ENCODE measurements at regions of chr4 and their contacts with region 1.

Region 1: GRCh38 chr4:2843263-2843940 is at the start of gene ADD1:
- DNase-seq: peak; percentile 94
- ATAC-seq: peak; percentile 88
- H3K4me3 Mint-ChIP-seq: peak within 1 kb of the TSS; percentile 88
- H3K27ac Mint-ChIP-seq: peak within 1 kb of the TSS; percentile 89
- H3K4me1 Mint-ChIP-seq: peaks cover 56% of the 10 kb centered on the region
- H3K27me3 Mint-ChIP-seq: no peaks in the 10 kb centered on the region
- total RNA-seq, gene ADD1: 196 to 206 TPM

Region 2: GRCh38 chr4:2412885-2413716 is 430.3 kb before region 1 on chr4:
- CTCF ChIA-PET with region 1: no interaction called
- POLR2A ChIA-PET with region 1: no interaction called
- intact Hi-C with region 1: loop called in 1 of 2 experiments (anchors 5 kb)
- DNase-seq: peak; percentile 94
- ATAC-seq: peak; percentile 82
- H3K4me3 Mint-ChIP-seq: peak overlapping the region; percentile 70
- H3K27ac Mint-ChIP-seq: peak overlapping the region; percentile 97
- H3K4me1 Mint-ChIP-seq: peaks cover 69% of the 10 kb centered on the region
- H3K27me3 Mint-ChIP-seq: peaks cover 9% of the 10 kb centered on the region

Region 3: GRCh38 chr4:2745981-2746806 is 97.2 kb before region 1 on chr4:
- CTCF ChIA-PET with region 1: no interaction called
- POLR2A ChIA-PET with region 1: no interaction called
- intact Hi-C with region 1: loop called (anchors 1 to 2 kb)
- DNase-seq: peak; percentile 98
- ATAC-seq: peak; percentile 97
- H3K4me3 Mint-ChIP-seq: peak overlapping the region; percentile 62
- H3K27ac Mint-ChIP-seq: peak overlapping the region; percentile 97
- H3K4me1 Mint-ChIP-seq: peaks cover 58% of the 10 kb centered on the region
- H3K27me3 Mint-ChIP-seq: no peaks in the 10 kb centered on the region

Region 4: DNA sequence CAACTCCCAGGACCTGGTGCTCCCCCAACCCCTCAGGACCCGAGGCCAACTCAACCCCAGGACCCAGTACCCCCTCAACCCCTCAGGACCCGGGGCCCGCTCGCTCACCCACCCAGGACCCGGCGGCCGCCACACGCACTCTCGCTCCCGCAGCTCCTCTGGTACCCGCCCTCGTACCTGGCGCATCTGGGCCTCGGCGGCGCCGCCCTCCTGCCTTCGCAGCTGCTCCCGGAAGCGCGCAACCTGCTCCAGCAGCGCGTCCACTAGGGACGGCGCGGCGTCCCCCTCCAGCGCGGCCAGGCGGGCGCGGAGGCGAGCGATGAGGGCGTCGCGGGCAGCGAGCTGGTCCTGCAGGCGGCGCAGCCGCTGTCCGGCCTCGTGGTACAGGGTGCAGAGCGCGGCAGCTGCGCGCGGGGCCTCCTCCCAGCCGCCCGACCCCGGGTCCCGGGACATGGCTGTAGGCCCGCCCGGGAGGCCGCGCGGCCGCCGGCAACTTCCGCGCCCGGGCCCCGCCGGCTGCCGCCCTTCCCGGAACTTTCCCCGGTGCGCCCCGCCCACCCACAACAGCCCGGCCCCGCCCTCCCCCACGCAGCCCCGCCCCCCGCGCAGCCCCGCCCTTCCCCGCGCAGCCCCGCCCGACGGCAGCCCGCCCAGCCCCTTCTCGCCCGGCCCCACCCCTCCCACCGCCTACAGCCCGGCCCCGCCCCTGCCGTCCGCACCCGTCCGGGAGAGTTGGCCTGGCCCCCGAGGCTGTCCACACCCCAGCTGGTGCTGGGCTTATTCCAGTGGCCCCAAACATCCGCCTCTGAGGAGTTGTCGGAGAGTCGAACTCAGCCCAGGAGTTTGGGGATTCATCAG is 87.3 kb before region 1 on chr4 and contains the start of gene TNIP2:
- CTCF ChIA-PET with region 1: no interaction called
- POLR2A ChIA-PET with region 1: no interaction called
- intact Hi-C with region 1: loop called (anchors 1 to 2 kb)
- DNase-seq: peak; percentile 91
- ATAC-seq: peak; percentile 78
- H3K4me3 Mint-ChIP-seq: peak within 1 kb of the TSS; percentile 79
- H3K27ac Mint-ChIP-seq: peak within 1 kb of the TSS; percentile 66
- H3K4me1 Mint-ChIP-seq: peaks cover 33% of the 10 kb centered on the region
- H3K27me3 Mint-ChIP-seq: no peaks in the 10 kb centered on the region
- total RNA-seq, gene TNIP2: 50.6 to 59.4 TPM

Region 5: GRCh38 chr4:2761035-2761923 is 82.1 kb before region 1 on chr4:
- CTCF ChIA-PET with region 1: interaction called, 7 read pairs
- POLR2A ChIA-PET with region 1: no interaction called
- intact Hi-C with region 1: loop called (anchors 1 kb)
- DNase-seq: peak; percentile 59
- ATAC-seq: peak; percentile 9
- H3K4me3 Mint-ChIP-seq: no peak overlapping the region
- H3K27ac Mint-ChIP-seq: no peak overlapping the region
- H3K4me1 Mint-ChIP-seq: peaks cover 11% of the 10 kb centered on the region
- H3K27me3 Mint-ChIP-seq: no peaks in the 10 kb centered on the region

Region 6: GRCh38 chr4:2792711-2793585 is 50.5 kb before region 1 on chr4 and contains the start of gene SH3BP2:
- CTCF ChIA-PET with region 1: no interaction called
- POLR2A ChIA-PET with region 1: no interaction called
- intact Hi-C with region 1: loop called in 1 of 2 experiments (anchors 2 kb)
- DNase-seq: peak; percentile 80
- ATAC-seq: peak; percentile 42
- H3K4me3 Mint-ChIP-seq: peak within 1 kb of the TSS; percentile 85
- H3K27ac Mint-ChIP-seq: peak within 1 kb of the TSS; percentile 87
- H3K4me1 Mint-ChIP-seq: peaks cover 43% of the 10 kb centered on the region
- H3K27me3 Mint-ChIP-seq: no peaks in the 10 kb centered on the region
- total RNA-seq, gene SH3BP2: 63.3 to 68.3 TPM

Region 7: DNA sequence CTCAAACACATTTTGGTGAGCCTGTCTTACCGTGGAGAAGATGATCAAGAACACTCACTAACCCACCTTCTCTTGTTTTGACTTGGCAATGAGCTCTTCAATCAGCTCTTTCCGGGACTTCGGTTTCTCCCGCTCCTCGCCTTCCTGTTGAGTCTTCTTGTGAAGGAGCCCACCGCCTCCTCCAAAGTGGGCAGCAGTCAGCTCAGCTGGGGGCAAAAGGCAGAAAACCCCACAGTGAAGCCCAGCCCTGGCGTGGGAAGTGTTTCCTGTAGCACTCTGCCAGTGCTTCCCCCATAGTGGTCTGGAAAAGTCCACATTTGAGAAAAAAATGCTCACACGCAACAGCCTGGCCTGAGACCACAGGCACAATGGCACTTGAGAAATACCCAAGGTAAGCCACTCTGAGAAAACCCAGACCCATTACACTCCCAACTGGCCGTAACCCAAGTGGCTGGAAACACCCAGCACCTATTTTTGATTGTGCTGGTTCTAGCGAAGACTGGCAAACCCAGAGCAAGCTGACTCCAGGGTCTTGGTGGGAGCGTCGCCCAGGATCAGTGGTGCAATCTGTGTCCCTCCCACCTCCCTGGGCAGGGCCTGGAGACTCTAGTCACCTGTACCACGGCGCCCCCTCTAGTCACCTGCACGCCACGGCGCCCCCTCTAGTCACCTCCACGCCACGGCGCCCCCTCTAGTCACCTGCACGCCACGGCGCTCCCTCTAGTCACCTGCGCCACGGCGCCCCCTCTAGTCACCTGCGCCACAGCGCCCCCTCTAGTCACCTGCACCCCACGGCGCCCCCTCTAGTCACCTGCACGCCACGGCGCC is 111.2 kb after region 1 on chr4:
- CTCF ChIA-PET with region 1: interaction called, 4 read pairs
- POLR2A ChIA-PET with region 1: no interaction called
- intact Hi-C with region 1: loop called in 1 of 2 experiments (anchors 1 kb)
- DNase-seq: peak; percentile 88
- ATAC-seq: peak; percentile 83
- H3K4me3 Mint-ChIP-seq: peak overlapping the region; percentile 51
- H3K27ac Mint-ChIP-seq: peak overlapping the region; percentile 90
- H3K4me1 Mint-ChIP-seq: peaks cover 69% of the 10 kb centered on the region
- H3K27me3 Mint-ChIP-seq: no peaks in the 10 kb centered on the region

Measured in activated CD4-positive, alpha-beta T cell treated with anti-CD3 and anti-CD28 coated beads for 36 hours (primary cell).